ENCODE measurements at regions of chr2 and their contacts with region 1.

Region 1: GRCh38 chr2:205574011-205574471 is 108.3 kb upstream of the NRP2 start:
- DNase-seq: no peak
- ATAC-seq: no peak

Region 2: DNA sequence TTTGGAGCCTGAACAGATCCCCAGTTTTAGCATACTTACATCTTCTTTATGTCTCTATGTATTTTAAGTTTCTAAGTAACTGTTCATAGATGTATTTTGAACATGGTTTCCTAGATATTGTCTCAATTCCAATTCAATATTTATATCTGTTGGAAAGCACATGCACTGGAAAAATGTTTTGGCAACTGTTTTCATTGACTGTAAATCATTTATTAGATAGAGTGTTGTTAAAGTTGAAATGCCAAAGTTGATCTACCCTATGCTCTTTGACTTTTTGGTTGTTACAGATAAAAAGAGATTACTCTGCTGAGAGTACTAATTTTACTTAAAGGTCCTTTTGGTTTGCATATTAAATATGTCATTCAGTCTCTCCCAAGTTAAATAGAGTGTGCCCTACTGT is 236.8 kb before region 1 on chr2:
- intact Hi-C with region 1: loop called (anchors 10 kb)
- DNase-seq: no peak
- ATAC-seq: no peak

Region 3: DNA sequence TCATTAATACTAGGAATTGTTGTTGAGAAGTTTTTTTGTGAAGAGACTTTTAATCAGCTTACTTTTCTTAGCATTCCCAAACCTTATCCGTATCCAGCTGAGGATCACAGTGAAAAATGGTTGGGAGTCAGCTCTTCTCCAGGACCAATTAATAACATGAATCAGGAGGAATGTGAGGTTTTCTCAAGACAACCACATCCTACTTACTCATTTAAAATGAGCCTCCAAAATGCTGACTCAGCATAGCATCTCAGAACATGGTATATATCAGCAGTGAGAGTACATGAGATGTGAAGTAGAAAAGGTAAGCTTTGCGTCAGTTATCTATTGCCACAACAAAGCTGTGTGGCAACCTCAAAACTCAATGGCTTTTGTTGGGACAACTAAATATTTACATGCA is 248.5 kb after region 1 on chr2:
- intact Hi-C with region 1: no loop called
- DNase-seq: no peak
- ATAC-seq: no peak

Region 4: GRCh38 chr2:205868773-205869333 is 294.8 kb after region 1 on chr2:
- intact Hi-C with region 1: no loop called
- DNase-seq: no peak
- ATAC-seq: no peak